ENCODE measurements at regions of chr6 and their contacts with region 1.

Region 1: DNA sequence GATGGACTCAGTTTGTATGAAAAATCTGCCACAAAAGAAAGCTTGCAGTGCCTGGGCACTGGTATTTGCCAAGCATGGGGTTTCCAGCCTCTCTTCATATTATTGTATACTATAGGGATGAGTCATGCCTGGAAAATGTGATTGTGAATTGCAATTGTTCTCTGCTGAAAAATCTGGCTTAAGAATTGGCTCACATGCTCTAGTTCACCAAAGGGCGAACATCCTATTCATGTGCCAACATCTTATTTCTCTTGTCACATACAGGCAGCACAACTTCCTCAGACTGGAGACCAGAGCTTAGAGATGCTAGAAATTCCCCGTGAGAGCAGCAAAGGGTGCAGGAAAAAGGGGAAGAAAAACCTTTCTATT is 103.6 kb upstream of the KCNK16 start:
- DNase-seq: peak; percentile 95
- H3K4me3 ChIP-seq: no peak overlapping the region
- H3K27ac ChIP-seq: peak overlapping the region; percentile 69
- H3K4me1 ChIP-seq: peaks cover 14% of the 10 kb centered on the region
- H3K27me3 ChIP-seq: no peaks in the 10 kb centered on the region
- CTCF ChIP-seq: no peak
- POLR2A ChIP-seq: no peak

Region 2: GRCh38 chr6:38350942-38351341 is 1075.1 kb before region 1 on chr6:
- CTCF ChIA-PET with region 1: no interaction called
- POLR2A ChIA-PET with region 1: no interaction called
- dilution Hi-C with region 1: no loop called
- intact Hi-C with region 1: no loop called
- DNase-seq: no peak
- H3K4me3 ChIP-seq: no peak overlapping the region
- H3K27ac ChIP-seq: no peak overlapping the region
- H3K4me1 ChIP-seq: peaks cover 10% of the 10 kb centered on the region
- H3K27me3 ChIP-seq: no peaks in the 10 kb centered on the region
- CTCF ChIP-seq: no peak
- POLR2A ChIP-seq: no peak

Region 3: DNA sequence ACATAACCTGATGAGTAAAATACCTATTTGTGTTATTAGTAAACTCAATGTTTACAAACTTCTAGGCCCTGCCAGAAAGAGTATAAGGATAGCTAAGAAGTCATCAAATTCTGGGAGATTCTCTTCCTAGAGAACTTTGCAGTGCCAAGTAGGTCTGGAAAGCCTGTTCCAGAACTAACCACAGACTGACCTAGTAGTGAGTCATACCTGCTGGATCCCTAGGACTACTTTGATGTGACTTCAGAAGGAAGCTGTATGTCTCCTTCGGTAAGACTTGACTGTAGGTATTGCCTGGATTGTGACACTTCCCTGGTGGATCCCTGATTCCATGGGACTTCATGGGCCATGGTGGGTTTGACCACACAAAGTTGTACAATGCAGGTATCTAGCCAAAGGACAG is 579.2 kb before region 1 on chr6:
- CTCF ChIA-PET with region 1: no interaction called
- POLR2A ChIA-PET with region 1: no interaction called
- dilution Hi-C with region 1: no loop called
- intact Hi-C with region 1: no loop called
- DNase-seq: no peak
- H3K4me3 ChIP-seq: no peak overlapping the region
- H3K27ac ChIP-seq: no peak overlapping the region
- H3K4me1 ChIP-seq: no peaks in the 10 kb centered on the region
- H3K27me3 ChIP-seq: peaks cover 0 to 2% of the 10 kb centered on the region in 2 experiments
- CTCF ChIP-seq: no peak
- POLR2A ChIP-seq: no peak

Region 4: DNA sequence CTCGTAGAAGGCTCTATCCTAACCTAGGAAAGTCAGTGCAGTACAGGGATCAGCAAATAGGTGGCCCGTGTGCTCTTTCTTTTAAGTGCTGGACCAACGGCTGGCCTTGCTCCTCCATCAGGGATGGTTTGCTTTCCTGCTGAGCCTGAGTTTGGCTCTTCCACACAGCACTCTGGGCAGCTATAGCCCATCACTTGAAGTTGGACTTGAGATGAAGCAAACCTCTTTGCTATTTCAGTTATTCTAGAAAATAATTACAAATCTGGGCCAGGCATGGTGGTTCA is 36.6 kb before region 1 on chr6:
- CTCF ChIA-PET with region 1: no interaction called
- POLR2A ChIA-PET with region 1: no interaction called
- dilution Hi-C with region 1: no loop called
- intact Hi-C with region 1: no loop called
- DNase-seq: no peak
- H3K4me3 ChIP-seq: no peak overlapping the region
- H3K27ac ChIP-seq: no peak overlapping the region
- H3K4me1 ChIP-seq: no peaks in the 10 kb centered on the region
- H3K27me3 ChIP-seq: no peaks in the 10 kb centered on the region
- CTCF ChIP-seq: peak in 1 of 2 donors; percentile 12
- POLR2A ChIP-seq: no peak

Region 5: DNA sequence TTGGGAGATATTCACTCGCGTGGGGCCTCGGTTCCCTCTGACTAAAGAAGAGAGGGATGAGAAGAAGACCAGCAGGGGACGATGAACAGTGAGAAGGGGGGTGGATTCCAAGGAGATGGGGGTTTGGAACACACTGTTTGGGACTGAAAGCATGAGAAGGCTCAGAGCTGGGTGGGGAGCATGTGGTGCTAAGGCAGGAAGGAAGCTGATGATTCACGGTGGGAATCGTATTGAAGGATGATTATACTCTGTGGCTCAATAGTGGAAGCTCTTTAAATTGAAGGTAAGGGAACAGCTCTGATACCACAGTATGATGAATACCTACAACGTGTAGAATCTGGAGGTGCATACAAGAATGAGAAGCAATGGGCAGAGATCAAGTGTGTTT is 14.0 kb after region 1 on chr6:
- CTCF ChIA-PET with region 1: no interaction called
- POLR2A ChIA-PET with region 1: no interaction called
- dilution Hi-C with region 1: no loop called
- intact Hi-C with region 1: loop called (anchors 2 kb)
- DNase-seq: no peak
- H3K4me3 ChIP-seq: no peak overlapping the region
- H3K27ac ChIP-seq: no peak overlapping the region
- H3K4me1 ChIP-seq: peaks cover 3% of the 10 kb centered on the region
- H3K27me3 ChIP-seq: no peaks in the 10 kb centered on the region
- CTCF ChIP-seq: no peak
- POLR2A ChIP-seq: no peak

Region 6: DNA sequence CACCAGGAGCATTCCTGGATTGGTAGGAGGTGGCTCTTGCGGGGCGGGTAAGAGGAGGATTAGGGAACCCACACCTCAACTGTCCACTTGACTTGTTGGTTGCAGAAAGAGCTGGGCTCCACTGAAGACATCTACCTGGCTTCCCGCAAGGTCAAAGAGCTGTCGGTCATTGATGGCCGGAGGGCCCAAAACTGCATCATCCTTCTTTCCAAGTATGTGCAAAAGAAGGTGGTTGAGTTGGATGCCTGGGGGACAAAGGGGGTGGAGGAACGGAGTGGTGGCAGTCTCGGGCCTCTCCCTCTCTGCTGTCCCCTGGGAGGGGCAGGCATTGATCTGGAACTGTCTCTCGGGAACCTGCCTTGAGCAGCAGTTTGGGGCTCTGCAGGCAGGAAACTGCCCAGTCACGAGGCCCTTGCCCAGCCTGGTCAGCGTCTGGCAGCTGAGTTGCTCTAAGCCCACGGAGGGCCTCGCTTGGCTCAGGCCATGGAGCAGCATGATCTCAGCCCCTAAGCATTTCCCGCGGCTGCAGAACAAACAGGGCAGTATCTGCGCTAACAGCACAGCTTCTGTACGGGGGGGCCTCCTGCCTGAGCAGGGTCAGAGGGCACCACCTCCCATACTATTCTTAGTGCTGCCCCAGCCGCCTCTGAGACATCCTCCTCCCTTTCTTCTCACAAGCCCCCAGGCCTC is 461.5 kb after region 1 on chr6:
- CTCF ChIA-PET with region 1: no interaction called
- POLR2A ChIA-PET with region 1: interaction called, 4 read pairs
- dilution Hi-C with region 1: no loop called
- intact Hi-C with region 1: loop called (anchors 5 kb)
- DNase-seq: peak; percentile 96
- H3K4me3 ChIP-seq: no peak overlapping the region
- H3K27ac ChIP-seq: peak overlapping the region; percentile 86
- H3K4me1 ChIP-seq: peaks cover 28% of the 10 kb centered on the region
- H3K27me3 ChIP-seq: no peaks in the 10 kb centered on the region
- CTCF ChIP-seq: no peak
- POLR2A ChIP-seq: peak; percentile 38

Region 7: DNA sequence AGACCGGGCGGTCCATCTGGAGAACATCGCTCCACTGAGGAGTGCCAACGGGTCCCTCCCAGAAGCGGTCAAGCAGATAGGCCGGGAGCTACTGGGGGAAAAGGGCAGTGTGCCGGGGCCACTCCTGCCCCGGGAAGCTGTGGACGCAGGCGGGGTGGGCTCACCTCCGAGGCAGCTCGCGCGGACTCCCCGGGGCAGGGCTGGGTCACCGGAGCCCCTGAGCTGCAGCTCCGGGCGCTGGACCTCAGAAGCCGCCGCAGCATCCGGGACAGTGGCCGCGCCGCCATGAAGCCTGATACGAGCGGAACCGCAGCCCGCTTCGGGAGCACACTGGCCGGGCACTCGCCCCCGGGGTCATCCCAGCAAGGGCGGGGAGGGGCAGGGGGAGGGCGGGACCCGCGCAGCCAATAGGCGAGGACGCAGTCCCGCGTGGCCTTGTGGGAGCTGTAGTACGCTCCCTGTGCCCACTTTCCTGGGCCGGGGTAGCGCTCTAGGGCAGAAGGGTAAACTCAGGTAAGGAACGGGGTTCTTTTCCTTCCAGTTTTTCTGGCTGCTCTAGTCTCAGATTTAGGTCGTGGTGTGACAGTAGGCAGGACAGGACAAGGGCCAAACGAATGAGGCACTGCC is 508.2 kb after region 1 on chr6 and contains the start of gene MOCS1:
- CTCF ChIA-PET with region 1: no interaction called
- POLR2A ChIA-PET with region 1: no interaction called
- dilution Hi-C with region 1: no loop called
- intact Hi-C with region 1: loop called (anchors 10 kb)
- DNase-seq: peak; percentile 73
- H3K4me3 ChIP-seq: peak within 1 kb of the TSS; percentile 65 to 75 (median 66)
- H3K27ac ChIP-seq: no peak within 1 kb of the TSS
- H3K4me1 ChIP-seq: peaks cover 9% of the 10 kb centered on the region
- H3K27me3 ChIP-seq: peaks cover 1 to 7% of the 10 kb centered on the region in 2 experiments
- CTCF ChIP-seq: no peak
- POLR2A ChIP-seq: peak; percentile 48
- total RNA-seq, gene MOCS1: 10.3 and 12.8 TPM in 2 replicates

Measured in endothelial cell of umbilical vein (primary cell).